ENCODE measurements at regions of chr12 and their contacts with region 1.

Region 1: GRCh38 chr12:115871714-115872113 is 405.8 kb downstream of the MED13L start:
- DNase-seq: no peak
- ATAC-seq: peak; percentile 39

Region 2: DNA sequence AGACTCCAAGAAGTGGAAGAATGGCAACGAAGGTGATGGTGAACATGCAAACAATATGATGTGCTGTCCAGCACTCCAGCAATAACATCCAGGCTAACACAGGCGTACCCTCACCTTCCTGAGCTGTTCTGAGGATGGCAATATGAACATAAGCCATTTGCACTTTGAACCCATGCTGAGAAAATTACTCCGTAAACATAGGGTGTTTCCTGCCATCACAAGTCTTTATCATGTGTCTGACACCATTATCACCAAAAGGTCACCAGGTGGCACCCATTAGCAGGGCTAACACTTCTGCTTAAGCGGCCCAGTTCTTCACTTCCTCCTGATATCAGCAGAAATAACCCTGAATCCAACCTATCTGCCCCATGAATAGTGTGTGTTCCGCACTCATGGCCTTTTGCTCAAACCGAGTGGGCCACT is 77.0 kb before region 1 on chr12:
- intact Hi-C with region 1: loop called (anchors 5 kb)
- DNase-seq: no peak
- ATAC-seq: no peak

Region 3: DNA sequence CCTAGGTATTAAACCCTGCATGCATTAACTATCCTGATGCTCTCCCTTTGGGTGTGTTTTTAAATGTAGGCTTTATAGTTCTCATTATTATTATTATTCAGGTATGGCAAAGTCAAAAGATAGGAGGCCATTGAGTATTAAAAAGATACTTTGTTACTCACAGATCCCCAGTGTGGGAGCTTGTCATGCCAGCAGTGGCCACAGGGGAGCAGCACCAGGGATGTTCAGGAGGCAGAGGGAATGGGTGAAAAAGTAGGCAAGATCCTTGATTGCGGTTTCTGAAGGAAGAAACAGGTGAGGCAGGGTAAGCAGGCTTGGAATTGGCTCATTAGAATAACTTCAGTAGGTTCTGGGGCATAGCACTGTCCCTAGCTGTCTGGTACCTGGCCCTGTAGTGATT is 23.5 kb after region 1 on chr12:
- intact Hi-C with region 1: no loop called
- DNase-seq: no peak
- ATAC-seq: no peak

Region 4: GRCh38 chr12:116194935-116195431 is 323.3 kb after region 1 on chr12:
- intact Hi-C with region 1: no loop called
- DNase-seq: no peak
- ATAC-seq: no peak

Measured in Right ventricle myocardium inferior (tissue), 1 donor.